ENCODE measurements at regions of chr3 and their contacts with region 1.

Region 1: DNA sequence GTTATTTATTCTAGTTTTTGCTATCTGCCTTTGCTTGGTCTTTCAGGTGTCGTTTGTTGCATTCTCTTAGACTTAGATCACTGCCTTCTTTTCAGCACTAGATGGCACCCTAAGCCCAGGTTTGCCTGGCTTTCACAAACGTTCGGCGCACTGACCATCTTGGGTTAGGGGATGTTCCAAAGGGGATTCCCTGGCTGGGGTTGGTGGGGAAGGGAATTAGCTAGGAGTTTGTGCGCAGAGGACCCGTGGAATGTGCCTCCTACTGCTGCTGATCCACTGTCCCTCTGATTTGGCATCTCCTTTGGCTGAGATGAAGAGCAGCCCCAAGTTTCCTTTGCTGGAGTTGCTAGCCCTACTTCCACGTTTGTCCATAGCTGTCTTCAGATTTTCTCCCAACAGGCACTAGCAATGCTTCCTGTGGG is 33.9 kb downstream of the PFN2 start:
- DNase-seq: no peak
- ATAC-seq: peak; percentile 42
- H3K4me3 Mint-ChIP-seq: no peak overlapping the region
- H3K27ac Mint-ChIP-seq: no peak overlapping the region
- H3K4me1 Mint-ChIP-seq: peaks cover 15% of the 10 kb centered on the region
- H3K27me3 Mint-ChIP-seq: no peaks in the 10 kb centered on the region
- CTCF ChIP-seq: no peak

Region 2: GRCh38 chr3:149816986-149817385 is 119.8 kb before region 1 on chr3:
- CTCF ChIA-PET with region 1: no interaction called
- POLR2A ChIA-PET with region 1: no interaction called
- intact Hi-C with region 1: no loop called
- DNase-seq: no peak
- ATAC-seq: no peak
- H3K4me3 Mint-ChIP-seq: no peak overlapping the region
- H3K27ac Mint-ChIP-seq: no peak overlapping the region
- H3K4me1 Mint-ChIP-seq: peaks cover 78% of the 10 kb centered on the region
- H3K27me3 Mint-ChIP-seq: no peaks in the 10 kb centered on the region
- CTCF ChIP-seq: no peak

Region 3: DNA sequence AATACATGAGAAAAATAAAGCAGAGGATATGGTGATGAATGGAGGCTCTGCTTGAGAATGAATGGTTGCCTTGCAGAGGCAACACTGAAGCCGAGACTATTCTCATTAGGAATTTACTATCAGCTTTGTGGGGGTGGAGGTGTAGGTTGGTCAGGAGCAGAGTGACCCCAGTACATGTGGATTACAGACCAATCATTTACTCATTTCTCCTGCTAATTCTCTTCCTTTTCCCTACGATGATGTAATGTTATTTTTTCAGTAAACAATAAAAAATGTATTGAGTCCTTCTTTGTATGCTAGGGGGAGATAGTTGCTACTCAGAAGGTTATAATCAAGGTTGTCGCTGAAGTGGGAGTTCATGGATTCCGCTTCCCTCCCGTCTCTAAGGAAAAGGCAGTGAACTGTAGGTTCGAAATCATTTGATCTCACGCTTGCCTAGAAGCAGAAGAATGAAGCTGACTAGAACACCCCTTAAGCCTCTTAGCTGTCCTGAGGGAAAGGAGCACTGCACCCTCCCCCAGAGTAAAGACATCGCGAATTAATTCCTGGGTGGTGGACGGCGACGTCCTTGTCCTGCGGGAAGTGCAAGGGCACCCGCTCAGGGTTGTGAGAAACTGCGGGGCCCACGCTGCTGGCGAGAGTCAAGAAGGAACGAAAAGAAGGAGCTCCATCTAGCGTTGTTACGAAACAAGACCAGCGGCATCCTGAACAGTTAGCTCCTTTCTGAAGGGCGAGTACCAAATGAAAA is 247.0 kb after region 1 on chr3:
- CTCF ChIA-PET with region 1: interaction called, 9 read pairs
- POLR2A ChIA-PET with region 1: no interaction called
- intact Hi-C with region 1: loop called (anchors 1 kb)
- DNase-seq: peak; percentile 23
- ATAC-seq: peak; percentile 49
- H3K4me3 Mint-ChIP-seq: no peak overlapping the region
- H3K27ac Mint-ChIP-seq: no peak overlapping the region
- H3K4me1 Mint-ChIP-seq: no peaks in the 10 kb centered on the region
- H3K27me3 Mint-ChIP-seq: peaks cover 13% of the 10 kb centered on the region
- CTCF ChIP-seq: no peak

Region 4: DNA sequence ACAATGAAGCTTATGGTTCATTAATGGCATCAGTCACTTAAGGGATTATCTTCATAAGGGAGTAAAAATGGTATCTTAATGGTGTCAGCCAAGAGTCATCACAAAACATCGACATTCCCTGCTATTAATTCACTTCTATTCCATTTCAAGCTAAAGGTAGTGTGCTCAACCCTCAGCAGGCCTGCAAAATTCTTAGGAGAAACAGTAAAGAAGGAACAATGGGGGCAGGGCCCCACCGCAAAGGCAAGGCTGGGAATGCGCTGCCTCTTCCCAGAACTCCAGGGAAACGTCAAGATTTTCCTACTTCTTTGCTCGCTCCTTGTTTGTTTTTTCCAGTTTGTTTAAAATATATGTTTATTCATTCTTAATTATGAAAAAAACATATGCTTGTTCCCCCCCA is 284.0 kb after region 1 on chr3:
- CTCF ChIA-PET with region 1: interaction called, 14 read pairs
- POLR2A ChIA-PET with region 1: no interaction called
- intact Hi-C with region 1: loop called (anchors 1 kb)
- DNase-seq: no peak
- ATAC-seq: no peak
- H3K4me3 Mint-ChIP-seq: no peak overlapping the region
- H3K27ac Mint-ChIP-seq: no peak overlapping the region
- H3K4me1 Mint-ChIP-seq: peaks cover 6% of the 10 kb centered on the region
- H3K27me3 Mint-ChIP-seq: peaks cover 51% of the 10 kb centered on the region
- CTCF ChIP-seq: no peak

Region 5: DNA sequence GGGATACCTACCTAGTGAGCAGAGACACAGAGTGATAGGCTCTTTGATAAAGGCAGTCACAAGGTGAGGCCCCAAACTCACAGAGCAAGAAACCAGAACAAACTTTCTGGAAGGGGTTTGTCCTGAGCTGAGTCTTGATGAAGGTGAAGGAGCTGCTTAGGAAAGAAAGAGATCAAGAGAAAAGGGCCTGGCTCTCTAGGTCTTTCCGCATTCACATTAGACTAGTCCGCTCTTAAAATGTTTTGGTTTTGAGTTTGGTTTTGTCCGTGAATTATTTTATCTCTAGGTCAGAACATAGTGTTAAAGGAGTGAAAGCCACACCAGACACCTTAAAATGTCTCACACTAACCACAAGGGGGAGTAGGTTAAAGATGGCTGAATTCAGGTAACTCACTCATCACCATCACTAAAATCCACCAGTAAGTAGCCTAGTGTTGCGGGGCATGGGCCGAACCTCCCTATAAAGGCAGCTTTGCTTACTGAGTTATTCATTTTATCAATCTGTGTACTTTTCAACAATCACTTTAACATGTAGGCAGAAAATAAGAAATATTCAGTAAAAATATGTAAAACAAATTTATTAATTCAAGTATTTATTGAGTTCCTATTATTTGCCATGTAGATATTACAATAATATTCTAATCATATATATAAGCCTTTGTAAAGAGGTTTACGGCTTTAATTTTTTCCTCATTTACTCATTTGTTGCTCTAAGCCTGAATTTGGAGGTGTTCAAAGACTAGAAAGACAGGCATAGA is 349.7 kb after region 1 on chr3:
- CTCF ChIA-PET with region 1: no interaction called
- POLR2A ChIA-PET with region 1: no interaction called
- intact Hi-C with region 1: loop called (anchors 1 kb)
- DNase-seq: no peak
- ATAC-seq: peak; percentile 74
- H3K4me3 Mint-ChIP-seq: no peak overlapping the region
- H3K27ac Mint-ChIP-seq: no peak overlapping the region
- H3K4me1 Mint-ChIP-seq: no peaks in the 10 kb centered on the region
- H3K27me3 Mint-ChIP-seq: peaks cover 21% of the 10 kb centered on the region
- CTCF ChIP-seq: peak; percentile 54

Measured in activated B cell treated with CpG ODN at 0.5 μM for 24 hours (primary cell).